PC-3 (cell line): ENCODE measurements at regions of chr3 and their contacts with region 1.

Region 1: DNA sequence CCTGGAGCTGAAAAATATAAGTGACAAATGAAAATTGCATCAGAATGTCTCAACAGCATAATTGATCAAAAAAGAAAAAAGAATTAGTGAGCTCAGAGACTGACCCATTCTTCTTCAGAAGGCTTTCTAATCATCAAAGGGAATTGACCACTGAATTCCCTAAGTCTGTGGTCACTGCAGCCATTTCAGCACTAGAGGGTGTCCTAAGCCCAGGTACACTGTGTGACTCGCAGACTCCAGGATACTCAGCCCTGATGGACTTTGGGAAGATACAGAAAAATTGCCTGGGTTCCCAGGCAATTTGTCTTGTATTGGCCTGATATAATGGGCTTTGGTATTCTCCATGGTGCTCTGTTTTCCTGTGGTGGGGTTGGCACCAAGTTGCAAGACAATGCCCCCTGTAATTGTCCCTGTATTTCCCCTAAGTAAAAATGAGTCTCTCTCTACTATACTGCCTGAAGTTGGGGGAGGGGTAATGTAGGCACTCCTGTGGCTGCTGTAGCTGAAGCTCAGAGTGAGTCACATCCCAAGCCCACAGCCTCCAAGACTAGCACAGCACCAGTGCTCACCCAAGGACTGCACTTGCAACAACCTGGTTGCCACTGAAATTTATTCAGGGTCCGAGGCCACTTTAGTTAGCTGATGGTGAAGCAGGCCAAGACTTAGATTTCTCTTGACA is 256.0 kb upstream of the STAC start:
- DNase-seq: peak; percentile 89
- ATAC-seq: peak; percentile 96
- H3K4me3 ChIP-seq: no peak overlapping the region
- H3K27ac ChIP-seq: no peak overlapping the region
- H3K4me1 ChIP-seq: peaks cover 12% of the 10 kb centered on the region
- H3K27me3 ChIP-seq: no peaks in the 10 kb centered on the region
- CTCF ChIP-seq: peak; percentile 95

Region 2: GRCh38 chr3:35965908-35966307 is 158.3 kb before region 1 on chr3:
- CTCF ChIA-PET with region 1: interaction called, 5 read pairs
- POLR2A ChIA-PET with region 1: no interaction called
- intact Hi-C with region 1: loop called (anchors 1 kb)
- DNase-seq: peak; percentile 75
- ATAC-seq: peak; percentile 86
- H3K4me3 ChIP-seq: no peak overlapping the region
- H3K27ac ChIP-seq: no peak overlapping the region
- H3K4me1 ChIP-seq: peaks cover 3% of the 10 kb centered on the region; the same call in 1 of the 2 replicates
- H3K27me3 ChIP-seq: no peaks in the 10 kb centered on the region
- CTCF ChIP-seq: peak; percentile 87

Region 3: GRCh38 chr3:36166477-36166876 is 42.2 kb after region 1 on chr3:
- CTCF ChIA-PET with region 1: no interaction called
- POLR2A ChIA-PET with region 1: no interaction called
- intact Hi-C with region 1: loop called (anchors 2 kb)
- DNase-seq: peak; percentile 97
- ATAC-seq: peak; percentile 99
- H3K4me3 ChIP-seq: peak overlapping the region; percentile 35
- H3K27ac ChIP-seq: peak overlapping the region; percentile 79
- H3K4me1 ChIP-seq: peaks cover 21% of the 10 kb centered on the region
- H3K27me3 ChIP-seq: no peaks in the 10 kb centered on the region
- CTCF ChIP-seq: no peak

Region 4: GRCh38 chr3:36332139-36332538 is 207.9 kb after region 1 on chr3:
- CTCF ChIA-PET with region 1: no interaction called
- POLR2A ChIA-PET with region 1: no interaction called
- intact Hi-C with region 1: loop called (anchors 5 kb)
- DNase-seq: no peak
- ATAC-seq: no peak
- H3K4me3 ChIP-seq: no peak overlapping the region
- H3K27ac ChIP-seq: no peak overlapping the region
- H3K4me1 ChIP-seq: no peaks in the 10 kb centered on the region
- H3K27me3 ChIP-seq: no peaks in the 10 kb centered on the region
- CTCF ChIP-seq: no peak

Region 5: GRCh38 chr3:36416599-36416998 is 292.3 kb after region 1 on chr3:
- CTCF ChIA-PET with region 1: no interaction called
- POLR2A ChIA-PET with region 1: no interaction called
- intact Hi-C with region 1: loop called (anchors 2 kb)
- DNase-seq: peak; percentile 82
- ATAC-seq: peak; percentile 97
- H3K4me3 ChIP-seq: peak overlapping the region; percentile 33; the same call in 1 of the 2 replicates
- H3K27ac ChIP-seq: peak overlapping the region; percentile 87
- H3K4me1 ChIP-seq: peaks cover 27% of the 10 kb centered on the region
- H3K27me3 ChIP-seq: no peaks in the 10 kb centered on the region
- CTCF ChIP-seq: no peak

Region 6: DNA sequence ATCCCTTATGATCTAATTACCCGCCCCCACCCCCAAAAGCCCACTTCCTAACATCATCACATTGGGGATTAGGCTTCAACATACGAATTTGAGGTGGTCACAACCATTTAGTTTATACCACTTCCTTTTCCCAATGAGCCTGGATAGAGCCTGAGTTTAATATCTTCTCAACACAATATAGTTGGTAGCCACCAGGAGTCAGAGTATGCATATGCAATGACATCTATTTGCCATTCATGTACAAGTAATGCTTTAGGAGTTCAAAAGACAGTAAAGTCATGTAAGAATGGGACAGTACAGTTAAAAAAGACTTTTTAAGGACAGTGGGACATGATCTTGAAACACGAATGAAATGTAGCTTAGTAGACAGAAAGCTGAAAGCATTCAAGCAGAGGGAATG is 467.7 kb after region 1 on chr3:
- CTCF ChIA-PET with region 1: no interaction called
- POLR2A ChIA-PET with region 1: no interaction called
- intact Hi-C with region 1: loop called (anchors 5 kb)
- DNase-seq: peak; percentile 44
- ATAC-seq: peak; percentile 70
- H3K4me3 ChIP-seq: no peak overlapping the region
- H3K27ac ChIP-seq: no peak overlapping the region
- H3K4me1 ChIP-seq: 0 out of 2 replicates have a peak, but pooled peaks cover under 1% of the 10 kb centered on the region
- H3K27me3 ChIP-seq: no peaks in the 10 kb centered on the region
- CTCF ChIP-seq: peak; percentile 62

Region 7: DNA sequence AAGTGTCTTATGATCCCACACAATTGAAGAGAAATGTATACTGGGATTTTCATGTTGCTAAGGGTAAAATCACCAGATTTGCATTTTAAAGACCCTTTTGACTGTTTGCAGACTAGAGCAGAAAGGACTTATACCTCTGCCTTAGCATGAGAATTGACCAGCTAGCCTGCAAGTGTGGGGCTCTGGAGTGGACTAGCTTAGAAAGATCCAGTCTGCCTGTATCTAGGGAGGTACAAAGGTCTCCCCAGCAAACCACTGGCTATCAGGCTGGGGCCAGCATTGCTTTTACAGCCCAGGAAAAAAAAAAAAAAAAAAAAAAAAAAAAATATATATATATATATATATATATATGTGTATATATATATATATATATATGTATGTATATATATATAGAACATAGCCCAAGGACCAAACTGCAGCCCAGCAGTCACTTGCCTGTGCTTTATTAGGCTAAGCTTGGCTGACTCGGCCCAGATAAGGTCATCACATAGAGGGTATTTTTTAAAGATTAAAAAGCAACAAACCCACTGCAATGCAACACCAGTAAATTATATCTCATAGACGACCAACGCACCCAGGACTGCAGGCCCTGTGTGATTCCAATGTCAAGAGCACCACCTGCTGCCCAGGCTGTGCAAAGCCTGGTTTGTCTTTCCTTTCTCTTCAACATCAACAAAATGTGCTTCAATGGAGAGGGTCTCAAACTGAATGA is 576.4 kb after region 1 on chr3:
- CTCF ChIA-PET with region 1: interaction called, 12 read pairs
- POLR2A ChIA-PET with region 1: no interaction called
- intact Hi-C with region 1: loop called (anchors 1 kb)
- DNase-seq: peak; percentile 81
- ATAC-seq: peak; percentile 74
- H3K4me3 ChIP-seq: no peak overlapping the region
- H3K27ac ChIP-seq: no peak overlapping the region
- H3K4me1 ChIP-seq: peaks cover 16% of the 10 kb centered on the region
- H3K27me3 ChIP-seq: no peaks in the 10 kb centered on the region
- CTCF ChIP-seq: peak; percentile 94